ENCODE measurements at regions of chr1 and their contacts with region 1.

Region 1: GRCh38 chr1:205121660-205122488 is at the start of gene RBBP5:
- DNase-seq: peak; percentile 97
- H3K4me3 ChIP-seq: peak within 1 kb of the TSS; percentile 85
- H3K4me3 Mint-ChIP-seq: peak within 1 kb of the TSS; percentile 96
- H3K27ac Mint-ChIP-seq: peak within 1 kb of the TSS; percentile 98
- H3K4me1 ChIP-seq: peaks cover 4% of the 10 kb centered on the region
- H3K4me1 Mint-ChIP-seq: peaks cover 11% of the 10 kb centered on the region
- H3K27me3 ChIP-seq: no peaks in the 10 kb centered on the region
- H3K27me3 Mint-ChIP-seq: no peaks in the 10 kb centered on the region
- CTCF ChIP-seq: peak; percentile 34 to 94
- total RNA-seq, gene RBBP5: 17.9 and 19.0 TPM in 2 replicates

Region 2: GRCh38 chr1:204267191-204267667 is 854.6 kb before region 1 on chr1:
- CTCF ChIA-PET with region 1: no interaction called
- POLR2A ChIA-PET with region 1: no interaction called
- intact Hi-C with region 1: no loop called
- DNase-seq: no peak
- H3K4me3 ChIP-seq: no peak overlapping the region
- H3K4me3 Mint-ChIP-seq: no peak overlapping the region
- H3K27ac Mint-ChIP-seq: peak overlapping the region; percentile 72
- H3K4me1 ChIP-seq: peaks cover 20% of the 10 kb centered on the region
- H3K4me1 Mint-ChIP-seq: peaks cover 14% of the 10 kb centered on the region
- H3K27me3 ChIP-seq: no peaks in the 10 kb centered on the region
- H3K27me3 Mint-ChIP-seq: no peaks in the 10 kb centered on the region
- CTCF ChIP-seq: no peak

Region 3: GRCh38 chr1:205141236-205142101 is 19.6 kb after region 1 on chr1:
- CTCF ChIA-PET with region 1: interaction called, 5 read pairs
- POLR2A ChIA-PET with region 1: interaction called, 6 read pairs
- intact Hi-C with region 1: loop called (anchors 1 kb)
- DNase-seq: peak; percentile 56 to 72
- H3K4me3 ChIP-seq: no peak overlapping the region
- H3K4me3 Mint-ChIP-seq: no peak overlapping the region
- H3K27ac Mint-ChIP-seq: no peak overlapping the region
- H3K4me1 ChIP-seq: peaks cover 15% of the 10 kb centered on the region
- H3K4me1 Mint-ChIP-seq: peaks cover 11% of the 10 kb centered on the region
- H3K27me3 ChIP-seq: no peaks in the 10 kb centered on the region
- H3K27me3 Mint-ChIP-seq: no peaks in the 10 kb centered on the region
- CTCF ChIP-seq: peak; percentile 66 to 67

Region 4: DNA sequence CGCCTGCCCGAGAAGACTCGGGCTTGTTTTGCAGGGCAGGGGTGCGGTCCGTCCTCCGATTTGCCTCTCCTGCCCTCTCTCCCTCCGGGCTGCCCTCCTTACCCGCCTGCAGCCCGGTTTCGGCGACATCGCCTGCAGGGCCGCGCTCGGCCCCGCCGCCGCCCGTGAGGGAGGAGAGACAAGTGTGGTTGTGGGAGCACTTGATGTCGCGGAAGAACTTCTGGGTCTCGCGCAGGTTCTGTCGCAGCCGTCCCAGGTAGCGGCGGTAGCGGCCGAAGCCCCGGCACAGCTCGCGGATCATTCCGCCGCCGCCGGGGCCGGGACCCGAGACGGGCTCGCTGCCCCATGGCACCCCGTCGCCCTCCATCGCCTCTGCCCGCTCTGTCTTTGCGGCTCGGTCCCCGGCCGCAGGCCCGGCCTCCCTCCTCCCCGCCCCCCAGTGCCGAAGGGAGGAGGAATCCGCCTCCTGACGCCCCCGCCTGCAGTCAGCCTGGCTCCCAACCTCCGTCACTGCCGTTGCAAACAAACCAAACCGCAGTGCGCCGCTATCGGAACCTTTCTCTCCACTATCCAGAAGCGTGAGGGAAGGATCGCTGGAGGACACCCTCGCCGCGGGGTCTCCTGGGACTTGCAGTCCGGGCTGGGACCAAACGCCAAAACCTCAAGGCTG is 89.4 kb after region 1 on chr1 and contains the start of gene DSTYK:
- CTCF ChIA-PET with region 1: no interaction called
- POLR2A ChIA-PET with region 1: no interaction called
- intact Hi-C with region 1: loop called (anchors 5 kb)
- DNase-seq: peak; percentile 93 to 94
- H3K4me3 ChIP-seq: peak within 1 kb of the TSS; percentile 89
- H3K4me3 Mint-ChIP-seq: peak within 1 kb of the TSS; percentile 97
- H3K27ac Mint-ChIP-seq: peak within 1 kb of the TSS; percentile 94
- H3K4me1 ChIP-seq: peaks cover 4% of the 10 kb centered on the region; the same call in 1 of the 2 replicates
- H3K4me1 Mint-ChIP-seq: peaks cover 13% of the 10 kb centered on the region
- H3K27me3 ChIP-seq: no peaks in the 10 kb centered on the region
- H3K27me3 Mint-ChIP-seq: no peaks in the 10 kb centered on the region
- CTCF ChIP-seq: no peak
- total RNA-seq, gene DSTYK: 6.2 and 6.3 TPM in 2 replicates

Region 5: DNA sequence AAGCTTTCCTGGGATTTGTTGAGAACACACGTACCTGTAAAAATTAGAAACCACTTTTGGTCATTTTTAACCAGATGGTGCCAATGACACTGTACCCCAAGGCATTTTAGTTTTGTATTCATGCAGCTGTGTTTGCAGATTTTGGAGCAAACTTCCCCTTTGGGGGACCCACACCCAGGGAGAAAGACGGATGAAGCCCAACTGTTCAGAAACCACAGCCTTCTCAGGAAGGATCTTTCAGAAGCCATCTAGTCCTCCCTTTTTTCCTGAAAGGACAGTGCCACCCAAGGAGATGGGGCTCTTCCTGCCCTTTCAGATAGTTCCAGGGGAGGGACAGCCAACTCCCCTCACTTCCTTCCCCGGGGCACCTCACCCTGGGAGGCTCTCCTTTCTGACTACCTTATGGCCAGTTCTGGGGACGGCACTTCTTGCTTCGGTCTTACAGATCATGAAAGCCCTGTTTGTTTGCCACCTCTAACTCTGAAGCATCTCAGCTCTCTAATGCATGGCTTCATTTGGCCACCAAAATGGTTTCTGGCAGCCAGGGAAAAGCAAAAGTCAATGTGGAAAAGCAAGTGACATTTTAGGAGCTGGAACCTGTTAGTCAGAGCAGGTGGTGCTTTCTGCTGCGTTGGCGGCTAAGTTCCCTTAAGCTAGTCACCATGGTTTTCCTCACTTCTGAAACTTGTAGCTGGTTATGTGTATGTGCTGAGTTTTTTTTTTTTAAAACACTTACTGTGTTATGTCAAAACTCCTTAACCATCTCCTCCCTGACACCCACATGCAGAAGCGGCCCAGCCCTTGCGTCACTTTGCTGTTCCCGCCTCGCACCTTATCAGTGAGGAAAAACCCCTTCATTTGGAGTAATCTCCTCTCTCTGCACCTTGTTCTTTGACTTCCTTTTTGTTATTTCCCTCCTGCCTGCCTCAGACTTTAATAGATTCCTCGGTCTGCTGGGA is 115.9 kb after region 1 on chr1:
- CTCF ChIA-PET with region 1: no interaction called
- POLR2A ChIA-PET with region 1: no interaction called
- intact Hi-C with region 1: no loop called
- DNase-seq: no peak
- H3K4me3 ChIP-seq: no peak overlapping the region
- H3K4me3 Mint-ChIP-seq: no peak overlapping the region
- H3K27ac Mint-ChIP-seq: no peak overlapping the region
- H3K4me1 ChIP-seq: no peaks in the 10 kb centered on the region
- H3K4me1 Mint-ChIP-seq: no peaks in the 10 kb centered on the region
- H3K27me3 ChIP-seq: no peaks in the 10 kb centered on the region
- H3K27me3 Mint-ChIP-seq: peaks cover 7% of the 10 kb centered on the region
- CTCF ChIP-seq: no peak